MCF 10A (cell line): ENCODE measurements at regions of chr1 and their contacts with region 1.

Region 1: GRCh38 chr1:234309598-234310459 is 63.4 kb upstream of the COA6 start:
- DNase-seq: peak; percentile 89
- H3K4me3 Mint-ChIP-seq: no peak overlapping the region
- H3K27ac Mint-ChIP-seq: no peak overlapping the region
- H3K4me1 Mint-ChIP-seq: peaks cover 2% of the 10 kb centered on the region
- H3K27me3 Mint-ChIP-seq: no peaks in the 10 kb centered on the region
- CTCF ChIP-seq: peak; percentile 99

Region 2: GRCh38 chr1:234135501-234135900 is 174.3 kb before region 1 on chr1:
- CTCF ChIA-PET with region 1: interaction called, 17 read pairs
- POLR2A ChIA-PET with region 1: interaction called, 6 read pairs
- intact Hi-C with region 1: no loop called
- DNase-seq: no peak
- H3K4me3 Mint-ChIP-seq: no peak overlapping the region
- H3K27ac Mint-ChIP-seq: no peak overlapping the region
- H3K4me1 Mint-ChIP-seq: peaks cover 15% of the 10 kb centered on the region
- H3K27me3 Mint-ChIP-seq: no peaks in the 10 kb centered on the region
- CTCF ChIP-seq: no peak

Region 3: GRCh38 chr1:234176000-234176399 is 133.8 kb before region 1 on chr1:
- CTCF ChIA-PET with region 1: interaction called, 81 read pairs
- POLR2A ChIA-PET with region 1: no interaction called
- intact Hi-C with region 1: no loop called
- DNase-seq: no peak
- H3K4me3 Mint-ChIP-seq: no peak overlapping the region
- H3K27ac Mint-ChIP-seq: no peak overlapping the region
- H3K4me1 Mint-ChIP-seq: no peaks in the 10 kb centered on the region
- H3K27me3 Mint-ChIP-seq: no peaks in the 10 kb centered on the region
- CTCF ChIP-seq: no peak

Region 4: GRCh38 chr1:234212764-234213657 is 96.8 kb before region 1 on chr1:
- CTCF ChIA-PET with region 1: interaction called, 39 read pairs
- POLR2A ChIA-PET with region 1: no interaction called
- intact Hi-C with region 1: loop called (anchors 1 kb)
- DNase-seq: peak; percentile 77
- H3K4me3 Mint-ChIP-seq: no peak overlapping the region
- H3K27ac Mint-ChIP-seq: no peak overlapping the region
- H3K4me1 Mint-ChIP-seq: peaks cover 6% of the 10 kb centered on the region
- H3K27me3 Mint-ChIP-seq: no peaks in the 10 kb centered on the region
- CTCF ChIP-seq: peak; percentile 34

Region 5: DNA sequence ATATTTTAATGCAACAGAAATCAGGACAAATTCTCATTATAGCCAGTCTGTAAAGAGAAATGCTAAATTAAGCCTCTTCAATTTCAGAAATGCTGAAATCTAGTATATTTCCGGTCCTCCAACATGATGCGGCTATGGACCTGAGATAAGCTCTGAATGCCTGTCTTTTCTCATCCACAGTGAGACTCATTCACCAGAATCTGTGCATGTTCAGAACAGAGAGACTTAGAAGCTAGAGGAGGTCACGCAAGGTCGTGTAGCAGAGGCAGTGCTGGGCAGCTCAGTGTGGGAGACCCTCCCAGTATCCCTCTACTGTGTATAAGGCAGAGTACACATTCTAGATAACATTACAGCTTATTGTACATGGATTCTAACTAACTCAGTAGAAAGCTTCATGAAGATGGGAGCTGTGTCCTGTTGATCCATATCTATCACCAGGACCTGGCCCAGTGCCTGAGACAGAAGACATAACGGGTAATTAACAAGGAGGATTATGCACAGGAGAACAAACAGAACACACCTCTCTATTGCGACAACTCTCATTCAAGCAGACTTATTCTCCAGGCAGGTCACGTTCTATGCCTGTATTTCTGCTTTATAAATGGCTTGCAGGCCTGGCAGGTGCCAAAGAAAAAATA is 33.6 kb before region 1 on chr1:
- CTCF ChIA-PET with region 1: interaction called, 39 read pairs
- POLR2A ChIA-PET with region 1: no interaction called
- intact Hi-C with region 1: no loop called
- DNase-seq: no peak
- H3K4me3 Mint-ChIP-seq: no peak overlapping the region
- H3K27ac Mint-ChIP-seq: no peak overlapping the region
- H3K4me1 Mint-ChIP-seq: no peaks in the 10 kb centered on the region
- H3K27me3 Mint-ChIP-seq: no peaks in the 10 kb centered on the region
- CTCF ChIP-seq: no peak

Region 6: GRCh38 chr1:234326497-234327366 is 16.9 kb after region 1 on chr1:
- CTCF ChIA-PET with region 1: interaction called, 233 read pairs
- POLR2A ChIA-PET with region 1: interaction called, 5 read pairs
- intact Hi-C with region 1: no loop called
- DNase-seq: peak; percentile 82
- H3K4me3 Mint-ChIP-seq: no peak overlapping the region
- H3K27ac Mint-ChIP-seq: no peak overlapping the region
- H3K4me1 Mint-ChIP-seq: peaks cover 6% of the 10 kb centered on the region
- H3K27me3 Mint-ChIP-seq: peaks cover 14% of the 10 kb centered on the region
- CTCF ChIP-seq: peak; percentile 84